ENCODE measurements at regions of chr11 and their contacts with region 1.

Region 1: DNA sequence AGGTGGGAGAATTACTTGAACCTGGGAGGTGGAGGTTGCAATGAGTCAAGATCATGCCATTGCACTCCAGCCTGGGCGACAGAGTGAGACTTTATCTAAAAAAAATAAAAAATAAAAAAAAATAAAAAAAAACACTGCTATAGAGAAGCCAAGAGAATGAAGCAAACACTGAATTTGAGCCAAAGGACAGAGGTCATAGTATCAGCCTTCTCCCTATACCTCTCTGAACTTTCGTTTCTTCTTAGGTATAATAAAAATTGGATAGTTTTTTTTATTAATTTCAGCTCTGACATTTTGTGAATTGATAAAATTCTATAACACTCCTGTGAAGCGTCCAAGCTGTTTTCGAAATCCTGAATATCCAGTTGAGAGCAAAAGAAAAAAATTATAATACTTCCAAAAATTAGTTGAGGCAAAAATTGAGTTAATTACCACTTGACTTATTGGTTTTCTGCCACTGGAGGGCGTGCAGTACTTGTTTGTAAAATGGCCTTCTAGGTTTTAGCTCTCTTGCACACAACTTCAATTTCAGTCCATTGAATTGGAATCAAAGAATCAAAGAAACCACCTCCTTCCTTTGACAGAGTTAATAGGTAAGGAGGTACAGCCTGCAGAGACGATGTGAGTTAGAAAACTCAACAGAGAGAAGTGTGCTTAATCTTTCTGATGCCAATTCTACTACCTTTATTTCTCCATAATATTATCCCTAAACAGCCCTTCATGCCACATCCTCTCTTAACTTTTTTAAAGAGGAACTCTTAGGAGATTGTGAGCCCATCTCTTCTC is 143.2 kb downstream of the BBOX1 start:
- DNase-seq: peak; percentile 72
- ATAC-seq: peak; percentile 56; the same call in 1 of the 2 replicates
- H3K4me3 ChIP-seq: no peak overlapping the region
- H3K27ac ChIP-seq: no peak overlapping the region
- H3K4me1 ChIP-seq: no peaks in the 10 kb centered on the region; the same call in 1 of the 2 replicates
- H3K27me3 ChIP-seq: peaks cover 27% of the 10 kb centered on the region
- CTCF ChIP-seq: peak; percentile 92
- POLR2A ChIP-seq: no peak
- RAD21 ChIP-seq: peak; percentile 96

Region 2: DNA sequence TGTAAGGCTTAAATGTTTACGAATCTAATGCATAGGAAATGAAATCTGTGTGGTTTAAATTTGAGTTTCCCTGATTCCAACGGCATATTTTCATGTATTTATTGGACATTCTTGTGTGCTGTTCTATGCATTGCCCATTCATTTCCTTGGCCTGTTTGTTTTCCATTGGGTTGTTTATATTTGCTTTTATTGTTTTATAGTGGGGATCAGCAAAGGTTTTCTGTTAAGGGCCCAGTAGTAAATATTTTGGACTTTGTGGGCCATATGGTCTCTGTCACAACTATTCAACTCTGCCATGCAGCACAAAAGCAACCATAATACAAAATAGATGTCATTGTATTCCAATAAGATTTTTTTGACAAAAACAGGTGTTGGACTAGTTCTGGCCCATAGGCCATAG is 294.0 kb after region 1 on chr11:
- CTCF ChIA-PET with region 1: no interaction called
- POLR2A ChIA-PET with region 1: interaction called, 10 read pairs
- dilution Hi-C with region 1: loop called (anchors 25 kb)
- in situ Hi-C with region 1: loop called (anchors 5 kb)
- intact Hi-C with region 1: no loop called
- DNase-seq: no peak
- ATAC-seq: no peak
- H3K4me3 ChIP-seq: no peak overlapping the region
- H3K27ac ChIP-seq: no peak overlapping the region
- H3K4me1 ChIP-seq: no peaks in the 10 kb centered on the region
- H3K27me3 ChIP-seq: no peaks in the 10 kb centered on the region
- CTCF ChIP-seq: no peak
- POLR2A ChIP-seq: no peak
- RAD21 ChIP-seq: no peak

Measured in IMR-90 (cell line).